Heart left ventricle (tissue), 16 donors: ENCODE measurements at regions of chr11 and their contacts with region 1.

Region 1: GRCh38 chr11:94519478-94520084 is 7.3 kb downstream of the C11orf97 start:
- DNase-seq: no peak
- ATAC-seq: no peak
- H3K4me3 ChIP-seq: peak overlapping the region in 1 of 12 donors; percentile 21
- H3K27ac ChIP-seq: no peak overlapping the region
- H3K4me1 ChIP-seq: peaks cover 0 to 3% (median 0%) of the 10 kb centered on the region in 12 donors
- H3K27me3 ChIP-seq: peaks cover 0 to 8% (median 0%) of the 10 kb centered on the region in 9 donors
- CTCF ChIP-seq: peak; percentile 50 to 75 (median 67)
- POLR2A ChIP-seq: no peak

Region 2: GRCh38 chr11:94563176-94563847 is 43.7 kb after region 1 on chr11:
- intact Hi-C with region 1: loop called in 9 of 10 experiments (anchors 1 to 5 kb)
- DNase-seq: no peak
- ATAC-seq: peak; percentile 95 to 99 (median 98)
- H3K4me3 ChIP-seq: no peak overlapping the region
- H3K27ac ChIP-seq: no peak overlapping the region
- H3K4me1 ChIP-seq: peaks cover 0 to 35% (median 6%) of the 10 kb centered on the region in 12 donors
- H3K27me3 ChIP-seq: no peaks in the 10 kb centered on the region
- CTCF ChIP-seq: peak in 9 of 12 donors; percentile 6 to 55 (median 48)
- POLR2A ChIP-seq: no peak

Region 3: GRCh38 chr11:94602430-94603372 is 83.1 kb after region 1 on chr11:
- intact Hi-C with region 1: loop called in 7 of 10 experiments (anchors 2 to 5 kb)
- DNase-seq: peak in 4 of 5 donors; percentile 57 to 69 (median 58)
- ATAC-seq: peak in 3 of 4 donors; percentile 33 to 93 (median 51)
- H3K4me3 ChIP-seq: no peak overlapping the region
- H3K27ac ChIP-seq: peak overlapping the region in 1 of 12 donors; percentile 72
- H3K4me1 ChIP-seq: peaks cover 0 to 15% (median 0%) of the 10 kb centered on the region in 12 donors
- H3K27me3 ChIP-seq: no peaks in the 10 kb centered on the region
- CTCF ChIP-seq: peak in 6 of 12 donors; percentile 30 to 69 (median 56)
- POLR2A ChIP-seq: no peak